Activated CD4-positive, alpha-beta T cell treated with anti-CD3 and anti-CD28 coated beads, Interleukin-2, amount 10 ng/mL, durations not matched to agents 7 days and 5 days (primary cell): ENCODE measurements at regions of chr12 and their contacts with region 1.

Region 1: GRCh38 chr12:7933255-7933729 is 2.7 kb downstream of the SLC2A3 start:
- DNase-seq: peak; percentile 85
- H3K4me3 Mint-ChIP-seq: no peak overlapping the region
- H3K27ac Mint-ChIP-seq: no peak overlapping the region
- H3K4me1 Mint-ChIP-seq: peaks cover 34% of the 10 kb centered on the region
- H3K27me3 Mint-ChIP-seq: no peaks in the 10 kb centered on the region

Region 2: GRCh38 chr12:7844116-7844515 is 89.2 kb before region 1 on chr12:
- CTCF ChIA-PET with region 1: no interaction called
- POLR2A ChIA-PET with region 1: no interaction called
- DNase-seq: no peak
- H3K4me3 Mint-ChIP-seq: no peak overlapping the region
- H3K27ac Mint-ChIP-seq: no peak overlapping the region
- H3K4me1 Mint-ChIP-seq: peaks cover 7% of the 10 kb centered on the region
- H3K27me3 Mint-ChIP-seq: peaks cover 12% of the 10 kb centered on the region

Region 3: GRCh38 chr12:7948589-7949260 is 15.4 kb after region 1 on chr12:
- CTCF ChIA-PET with region 1: interaction called, 11 read pairs
- POLR2A ChIA-PET with region 1: no interaction called
- DNase-seq: no peak
- H3K4me3 Mint-ChIP-seq: no peak overlapping the region
- H3K27ac Mint-ChIP-seq: no peak overlapping the region
- H3K4me1 Mint-ChIP-seq: peaks cover 10% of the 10 kb centered on the region
- H3K27me3 Mint-ChIP-seq: no peaks in the 10 kb centered on the region

Region 4: DNA sequence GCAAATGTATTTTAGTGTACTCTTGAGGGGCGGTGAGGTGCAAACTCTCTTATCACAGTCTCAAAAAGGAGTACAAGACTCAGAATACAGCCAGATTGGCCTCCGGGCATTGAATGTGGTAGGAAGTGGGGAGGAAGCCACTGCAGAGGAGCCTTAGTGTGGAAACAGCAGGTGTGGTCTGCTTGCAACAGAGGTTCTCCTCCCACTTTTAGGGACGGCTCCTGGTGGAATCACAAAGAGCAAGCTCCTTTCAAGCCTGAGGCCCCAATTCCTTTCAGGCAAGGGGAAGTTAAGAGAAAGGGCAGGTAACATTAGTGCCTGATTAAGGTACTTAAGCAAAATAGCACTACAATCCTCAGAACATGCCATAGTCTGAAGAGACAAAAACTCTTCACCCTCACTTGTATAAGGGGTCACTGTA is 26.4 kb after region 1 on chr12:
- CTCF ChIA-PET with region 1: interaction called, 70 read pairs
- POLR2A ChIA-PET with region 1: interaction called, 88 read pairs
- DNase-seq: peak; percentile 72
- H3K4me3 Mint-ChIP-seq: peak overlapping the region; percentile 83
- H3K27ac Mint-ChIP-seq: peak overlapping the region; percentile 90
- H3K4me1 Mint-ChIP-seq: peaks cover 50% of the 10 kb centered on the region
- H3K27me3 Mint-ChIP-seq: no peaks in the 10 kb centered on the region

Region 5: GRCh38 chr12:7970475-7971252 is 37.4 kb after region 1 on chr12:
- CTCF ChIA-PET with region 1: interaction called, 70 read pairs
- POLR2A ChIA-PET with region 1: interaction called, 12 read pairs
- DNase-seq: peak; percentile 88
- H3K4me3 Mint-ChIP-seq: peak overlapping the region; percentile 87
- H3K27ac Mint-ChIP-seq: peak overlapping the region; percentile 99
- H3K4me1 Mint-ChIP-seq: peaks cover 45% of the 10 kb centered on the region
- H3K27me3 Mint-ChIP-seq: no peaks in the 10 kb centered on the region

Region 6: GRCh38 chr12:7989827-7990551 is 56.7 kb after region 1 on chr12:
- CTCF ChIA-PET with region 1: interaction called, 23 read pairs
- POLR2A ChIA-PET with region 1: interaction called, 11 read pairs
- DNase-seq: peak; percentile 84
- H3K4me3 Mint-ChIP-seq: peak overlapping the region; percentile 50
- H3K27ac Mint-ChIP-seq: peak overlapping the region; percentile 91
- H3K4me1 Mint-ChIP-seq: peaks cover 55% of the 10 kb centered on the region
- H3K27me3 Mint-ChIP-seq: no peaks in the 10 kb centered on the region

Region 7: GRCh38 chr12:7995266-7995963 is 62.1 kb after region 1 on chr12:
- CTCF ChIA-PET with region 1: interaction called, 23 read pairs
- POLR2A ChIA-PET with region 1: interaction called, 11 read pairs
- DNase-seq: peak; percentile 90
- H3K4me3 Mint-ChIP-seq: no peak overlapping the region
- H3K27ac Mint-ChIP-seq: no peak overlapping the region
- H3K4me1 Mint-ChIP-seq: peaks cover 23% of the 10 kb centered on the region
- H3K27me3 Mint-ChIP-seq: no peaks in the 10 kb centered on the region